OCI-LY7 (cell line): ENCODE measurements at regions of chr10 and their contacts with region 1.

Region 1: GRCh38 chr10:45672181-45673073 is at the start of gene ZFAND4:
- DNase-seq: peak; percentile 97
- H3K4me3 ChIP-seq: peak within 1 kb of the TSS; percentile 89
- H3K27ac ChIP-seq: peak within 1 kb of the TSS; percentile 71
- H3K4me1 ChIP-seq: peaks cover 9% of the 10 kb centered on the region
- CTCF ChIP-seq: peak; percentile 72
- total RNA-seq, gene ZFAND4: 15.1 and 18.6 TPM in 2 replicates

Region 2: GRCh38 chr10:45249978-45250693 is 422.3 kb before region 1 on chr10:
- CTCF ChIA-PET with region 1: no interaction called
- POLR2A ChIA-PET with region 1: no interaction called
- intact Hi-C with region 1: loop called (anchors 1 kb)
- DNase-seq: peak; percentile 91
- H3K4me3 ChIP-seq: peak overlapping the region; percentile 54
- H3K27ac ChIP-seq: peak overlapping the region; percentile 72
- H3K4me1 ChIP-seq: peaks cover 10% of the 10 kb centered on the region
- CTCF ChIP-seq: peak; percentile 84

Region 3: GRCh38 chr10:45464958-45465567 is 207.4 kb before region 1 on chr10:
- CTCF ChIA-PET with region 1: interaction called, 9 read pairs
- POLR2A ChIA-PET with region 1: interaction called, 20 read pairs
- intact Hi-C with region 1: loop called (anchors 1 kb)
- DNase-seq: peak; percentile 82
- H3K4me3 ChIP-seq: peak overlapping the region; percentile 69
- H3K27ac ChIP-seq: peak overlapping the region; percentile 95
- H3K4me1 ChIP-seq: peaks cover 67% of the 10 kb centered on the region
- CTCF ChIP-seq: peak; percentile 98

Region 4: GRCh38 chr10:45594276-45595106 is 77.9 kb before region 1 on chr10:
- CTCF ChIA-PET with region 1: no interaction called
- POLR2A ChIA-PET with region 1: interaction called, 4 read pairs
- intact Hi-C with region 1: loop called (anchors 2 kb)
- DNase-seq: peak; percentile 98
- H3K4me3 ChIP-seq: peak overlapping the region; percentile 88
- H3K27ac ChIP-seq: no peak overlapping the region
- H3K4me1 ChIP-seq: peaks cover 28% of the 10 kb centered on the region
- CTCF ChIP-seq: peak; percentile 32; the same call in 1 of the 2 replicates

Region 5: GRCh38 chr10:45640941-45641340 is 31.5 kb before region 1 on chr10:
- CTCF ChIA-PET with region 1: no interaction called
- POLR2A ChIA-PET with region 1: no interaction called
- intact Hi-C with region 1: no loop called
- DNase-seq: no peak
- H3K4me3 ChIP-seq: no peak overlapping the region
- H3K27ac ChIP-seq: no peak overlapping the region
- H3K4me1 ChIP-seq: no peaks in the 10 kb centered on the region
- CTCF ChIP-seq: no peak

Region 6: GRCh38 chr10:45660876-45661411 is 11.5 kb before region 1 on chr10:
- CTCF ChIA-PET with region 1: interaction called, 3 read pairs
- POLR2A ChIA-PET with region 1: interaction called, 29 read pairs
- intact Hi-C with region 1: loop called (anchors 1 kb)
- DNase-seq: peak; percentile 55
- H3K4me3 ChIP-seq: peak overlapping the region; percentile 40
- H3K27ac ChIP-seq: peak overlapping the region; percentile 83
- H3K4me1 ChIP-seq: peaks cover 64% of the 10 kb centered on the region
- CTCF ChIP-seq: no peak

Region 7: GRCh38 chr10:46325023-46325422 is 652.6 kb after region 1 on chr10:
- CTCF ChIA-PET with region 1: no interaction called
- POLR2A ChIA-PET with region 1: no interaction called
- intact Hi-C with region 1: no loop called
- DNase-seq: peak; percentile 36
- H3K4me3 ChIP-seq: no peak overlapping the region
- H3K27ac ChIP-seq: no peak overlapping the region
- H3K4me1 ChIP-seq: no peaks in the 10 kb centered on the region
- CTCF ChIP-seq: peak; percentile 77